HepG2 (cell line): ENCODE measurements at regions of chr1 and their contacts with region 1.

Region 1: DNA sequence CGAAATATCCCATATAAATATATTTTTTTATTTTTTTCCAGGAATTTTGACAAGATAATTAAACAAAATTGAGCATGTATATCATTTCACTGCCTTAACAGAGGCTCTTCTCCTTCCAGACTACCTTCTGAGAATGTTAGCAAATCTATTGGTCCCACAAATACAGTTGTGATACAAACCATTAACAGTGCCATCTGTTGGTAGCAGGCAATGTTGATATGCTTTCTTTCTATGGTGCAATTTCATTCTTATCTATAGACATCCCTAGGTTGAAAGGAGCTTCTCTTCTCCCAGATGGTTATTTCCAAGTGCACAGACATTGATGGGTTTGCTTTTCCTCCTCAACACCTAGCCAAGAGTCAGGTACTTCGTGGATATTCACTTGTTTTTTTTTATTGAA is 303.6 kb downstream of the USH2A start:
- DNase-seq: peak; percentile 11
- ATAC-seq: peak; percentile 78
- H3K4me3 ChIP-seq: no peak overlapping the region
- H3K27ac ChIP-seq: no peak overlapping the region
- H3K4me1 ChIP-seq: no peaks in the 10 kb centered on the region
- H3K27me3 ChIP-seq: no peaks in the 10 kb centered on the region
- CTCF ChIP-seq: peak; percentile 56
- EP300 ChIP-seq: no peak
- POLR2A ChIP-seq: no peak
- RAD21 ChIP-seq: no peak

Region 2: GRCh38 chr1:215710036-215710898 is 409.3 kb before region 1 on chr1:
- CTCF ChIA-PET with region 1: no interaction called
- POLR2A ChIA-PET with region 1: no interaction called
- in situ Hi-C with region 1: no loop called
- intact Hi-C with region 1: loop called (anchors 5 kb)
- DNase-seq: peak; percentile 59
- ATAC-seq: peak; percentile 88
- H3K4me3 ChIP-seq: no peak overlapping the region
- H3K27ac ChIP-seq: no peak overlapping the region
- H3K4me1 ChIP-seq: no peaks in the 10 kb centered on the region
- H3K27me3 ChIP-seq: no peaks in the 10 kb centered on the region
- CTCF ChIP-seq: peak; percentile 68
- EP300 ChIP-seq: no peak
- POLR2A ChIP-seq: no peak
- RAD21 ChIP-seq: no peak

Region 3: GRCh38 chr1:215824245-215824644 is 295.4 kb before region 1 on chr1:
- CTCF ChIA-PET with region 1: no interaction called
- POLR2A ChIA-PET with region 1: no interaction called
- in situ Hi-C with region 1: no loop called
- intact Hi-C with region 1: loop called (anchors 1 kb)
- DNase-seq: no peak
- ATAC-seq: no peak
- H3K4me3 ChIP-seq: no peak overlapping the region
- H3K27ac ChIP-seq: no peak overlapping the region
- H3K4me1 ChIP-seq: no peaks in the 10 kb centered on the region
- H3K27me3 ChIP-seq: no peaks in the 10 kb centered on the region
- CTCF ChIP-seq: 0 out of 2 replicates have a peak, but pooled peaks have one; percentile 22
- EP300 ChIP-seq: no peak
- POLR2A ChIP-seq: no peak
- RAD21 ChIP-seq: no peak

Region 4: DNA sequence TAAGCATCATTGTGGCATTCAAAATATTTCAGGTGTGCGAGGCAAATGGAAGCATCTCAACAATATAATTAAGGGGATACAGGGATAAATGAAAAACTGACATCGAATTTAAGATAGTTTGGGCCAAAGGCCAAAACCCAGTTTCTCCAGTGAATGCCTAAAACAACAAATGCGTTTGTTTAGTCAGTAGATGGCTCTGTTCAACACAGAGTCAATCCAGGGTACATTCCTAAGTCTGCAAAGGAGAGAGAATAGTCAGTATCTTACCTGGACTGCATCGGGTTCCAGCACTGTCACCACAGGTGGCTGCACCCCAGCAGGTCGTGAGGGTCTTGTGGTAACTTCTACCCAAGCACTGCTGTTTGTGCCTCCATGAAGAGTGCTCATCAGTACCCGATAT is 231.4 kb before region 1 on chr1:
- CTCF ChIA-PET with region 1: no interaction called
- POLR2A ChIA-PET with region 1: no interaction called
- in situ Hi-C with region 1: no loop called
- intact Hi-C with region 1: loop called (anchors 1 kb)
- DNase-seq: no peak
- ATAC-seq: peak; percentile 73
- H3K4me3 ChIP-seq: no peak overlapping the region
- H3K27ac ChIP-seq: no peak overlapping the region
- H3K4me1 ChIP-seq: no peaks in the 10 kb centered on the region
- H3K27me3 ChIP-seq: no peaks in the 10 kb centered on the region
- CTCF ChIP-seq: peak; percentile 39
- EP300 ChIP-seq: no peak
- POLR2A ChIP-seq: no peak
- RAD21 ChIP-seq: no peak

Region 5: DNA sequence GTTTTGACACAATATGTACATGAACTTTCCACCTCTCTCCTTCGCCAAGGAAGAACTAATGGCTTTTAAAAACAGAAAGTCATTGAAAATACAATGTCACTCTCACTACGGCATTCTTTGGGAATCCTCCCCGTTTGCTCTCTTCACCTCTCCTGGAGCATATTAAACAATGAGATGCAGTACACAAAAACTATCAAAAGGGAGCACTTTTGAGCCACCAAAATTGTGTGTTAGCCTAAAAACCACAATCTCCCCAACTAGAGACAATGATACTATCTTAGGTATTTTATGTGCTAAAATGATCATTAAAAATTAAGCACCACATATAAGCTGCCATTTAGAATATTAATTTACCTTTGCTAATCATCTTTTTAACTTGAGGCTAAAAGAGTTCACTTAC is 127.0 kb before region 1 on chr1:
- CTCF ChIA-PET with region 1: no interaction called
- POLR2A ChIA-PET with region 1: no interaction called
- in situ Hi-C with region 1: no loop called
- intact Hi-C with region 1: loop called (anchors 2 kb)
- DNase-seq: peak; percentile 1
- ATAC-seq: no peak; the same call in 2 of the 3 replicates
- H3K4me3 ChIP-seq: no peak overlapping the region
- H3K27ac ChIP-seq: no peak overlapping the region
- H3K4me1 ChIP-seq: no peaks in the 10 kb centered on the region
- H3K27me3 ChIP-seq: no peaks in the 10 kb centered on the region; a peak in 1 of 5 replicates
- CTCF ChIP-seq: peak; percentile 40
- EP300 ChIP-seq: no peak
- POLR2A ChIP-seq: no peak
- RAD21 ChIP-seq: no peak